Mammary epithelial cell (primary cell): ENCODE measurements at regions of chr2 and their contacts with region 1.

Region 1: GRCh38 chr2:162113776-162114168 is 38.3 kb downstream of the GCG start:
- DNase-seq: peak; percentile 71
- H3K4me3 ChIP-seq: no peak overlapping the region
- H3K27ac ChIP-seq: peak overlapping the region; percentile 35
- H3K4me1 ChIP-seq: peaks cover 49% of the 10 kb centered on the region
- H3K27me3 ChIP-seq: no peaks in the 10 kb centered on the region
- CTCF ChIP-seq: no peak

Region 2: GRCh38 chr2:162007447-162008040 is 106.2 kb before region 1 on chr2:
- CTCF ChIA-PET with region 1: interaction called, 7 read pairs
- dilution Hi-C with region 1: no loop called
- in situ Hi-C with region 1: loop called in 1 of 2 experiments (anchors 10 kb)
- intact Hi-C with region 1: no loop called
- DNase-seq: no peak
- H3K4me3 ChIP-seq: no peak overlapping the region
- H3K27ac ChIP-seq: no peak overlapping the region
- H3K4me1 ChIP-seq: peaks cover 4% of the 10 kb centered on the region
- H3K27me3 ChIP-seq: no peaks in the 10 kb centered on the region
- CTCF ChIP-seq: peak; percentile 52 to 61

Region 3: DNA sequence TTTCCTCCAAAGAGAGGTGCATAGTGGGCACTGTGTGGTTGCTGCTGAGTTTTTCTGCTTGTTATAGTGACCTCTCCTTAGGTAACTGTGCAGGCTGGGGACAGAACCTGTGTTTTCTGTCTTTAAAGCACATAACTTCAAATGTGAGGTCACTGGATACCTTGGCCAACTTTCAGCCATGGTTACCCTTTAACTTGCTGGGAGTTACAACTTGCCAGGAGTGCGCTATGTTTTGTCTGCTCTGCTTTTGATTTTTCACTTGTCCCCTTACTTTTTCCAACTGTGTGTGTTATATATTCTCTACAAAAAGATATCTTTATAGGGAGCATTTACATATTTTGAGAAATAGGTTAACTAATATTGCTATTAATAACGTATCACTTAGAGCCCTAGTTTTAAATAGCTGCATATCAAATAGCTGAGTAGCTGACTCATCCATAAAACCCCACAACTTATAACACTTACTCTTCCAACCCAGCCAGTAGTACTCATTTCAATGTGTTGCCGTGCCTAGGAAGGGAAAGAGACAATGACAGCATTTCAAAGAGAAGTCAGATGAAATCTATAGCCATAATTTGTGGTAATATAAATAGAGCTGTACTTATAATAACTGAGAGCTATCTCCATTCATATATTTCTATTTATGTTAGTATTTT is 91.4 kb before region 1 on chr2:
- CTCF ChIA-PET with region 1: no interaction called
- dilution Hi-C with region 1: no loop called
- in situ Hi-C with region 1: loop called in 1 of 2 experiments (anchors 5 kb)
- intact Hi-C with region 1: loop called (anchors 5 kb)
- DNase-seq: peak; percentile 45
- H3K4me3 ChIP-seq: no peak overlapping the region
- H3K27ac ChIP-seq: no peak overlapping the region
- H3K4me1 ChIP-seq: peaks cover 6% of the 10 kb centered on the region
- H3K27me3 ChIP-seq: no peaks in the 10 kb centered on the region
- CTCF ChIP-seq: no peak

Region 4: DNA sequence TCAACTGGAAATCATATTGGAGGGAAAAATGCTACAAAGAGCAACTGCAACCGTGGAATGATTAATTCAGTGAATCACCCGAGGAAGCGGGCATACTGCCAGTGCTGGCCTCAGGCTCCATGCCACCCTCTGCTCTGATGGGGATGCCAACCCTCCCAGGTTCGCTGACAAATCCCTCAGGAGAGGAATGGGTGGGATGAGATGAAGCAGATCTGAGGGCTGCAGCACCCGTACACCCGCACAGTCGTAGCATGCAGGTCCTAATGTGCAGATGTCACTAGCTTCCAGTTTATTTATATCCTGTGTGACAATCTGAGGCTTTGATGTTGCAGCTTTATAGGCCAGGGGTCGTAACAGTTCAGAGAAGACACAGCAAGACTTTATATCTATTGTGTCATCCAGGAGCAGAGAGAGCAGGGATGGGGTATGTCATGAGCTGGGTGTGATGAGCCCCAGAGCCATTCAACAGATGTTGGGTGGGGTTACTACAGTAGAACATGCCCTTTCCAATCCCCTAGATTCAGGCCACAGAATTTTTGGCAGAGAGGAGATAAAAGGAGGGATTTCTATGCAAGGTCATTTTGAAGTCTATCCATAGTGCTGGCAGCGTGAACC is 84.4 kb before region 1 on chr2:
- CTCF ChIA-PET with region 1: no interaction called
- dilution Hi-C with region 1: no loop called
- in situ Hi-C with region 1: loop called in 1 of 2 experiments (anchors 5 kb)
- intact Hi-C with region 1: loop called (anchors 5 kb)
- DNase-seq: peak; percentile 78
- H3K4me3 ChIP-seq: no peak overlapping the region
- H3K27ac ChIP-seq: no peak overlapping the region
- H3K4me1 ChIP-seq: peaks cover 32% of the 10 kb centered on the region
- H3K27me3 ChIP-seq: no peaks in the 10 kb centered on the region
- CTCF ChIP-seq: no peak

Region 5: DNA sequence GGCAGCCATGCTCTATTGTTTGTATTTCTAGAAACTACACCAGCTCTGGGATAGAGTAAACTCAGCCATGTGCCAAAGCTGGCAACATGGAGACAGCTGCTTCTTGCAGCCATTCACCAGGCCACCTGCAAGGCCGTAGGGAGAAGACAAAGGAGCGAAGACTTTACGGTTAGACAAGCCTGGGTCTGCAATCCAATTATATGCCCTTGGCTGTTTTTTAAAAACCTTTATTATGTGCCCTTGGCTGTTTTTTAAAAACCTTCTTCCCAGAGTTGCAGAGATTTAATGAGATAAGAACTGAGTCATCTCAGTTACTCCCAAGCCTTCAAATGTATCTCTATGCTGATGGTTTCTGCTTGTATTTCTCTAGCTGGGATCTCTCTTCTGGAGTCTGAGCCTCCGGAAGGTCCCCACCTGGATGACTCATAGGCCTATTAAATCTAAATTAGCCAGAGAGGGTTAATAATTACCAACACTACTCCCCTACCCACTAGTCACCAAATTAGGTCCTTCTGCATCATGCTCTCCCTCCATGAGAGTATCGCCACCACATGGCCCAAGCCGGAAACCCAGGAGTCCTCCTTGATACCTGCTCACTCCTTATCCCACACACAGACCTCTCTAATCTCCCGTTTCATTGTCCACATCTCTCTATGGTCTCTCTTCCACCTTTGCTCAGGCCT is 22.3 kb before region 1 on chr2:
- CTCF ChIA-PET with region 1: no interaction called
- dilution Hi-C with region 1: no loop called
- in situ Hi-C with region 1: no loop called
- intact Hi-C with region 1: loop called (anchors 1 kb)
- DNase-seq: peak; percentile 90
- H3K4me3 ChIP-seq: no peak overlapping the region
- H3K27ac ChIP-seq: peak overlapping the region; percentile 93
- H3K4me1 ChIP-seq: peaks cover 66% of the 10 kb centered on the region
- H3K27me3 ChIP-seq: no peaks in the 10 kb centered on the region
- CTCF ChIP-seq: peak; percentile 36 to 51